B cell (primary cell): ENCODE measurements at regions of chr6 and their contacts with region 1.

Region 1: GRCh38 chr6:41182069-41183034 is 18.6 kb downstream of the TREML2 start:
- DNase-seq: peak; percentile 66
- ATAC-seq: peak; percentile 71
- H3K4me3 ChIP-seq: no peak overlapping the region
- H3K4me3 Mint-ChIP-seq: peak overlapping the region; percentile 35
- H3K27ac ChIP-seq: peak overlapping the region; percentile 70 to 74
- H3K27ac Mint-ChIP-seq: peak overlapping the region; percentile 75
- H3K4me1 ChIP-seq: peaks cover 48 to 50% of the 10 kb centered on the region in 2 donors
- H3K4me1 Mint-ChIP-seq: peaks cover 54% of the 10 kb centered on the region
- H3K27me3 ChIP-seq: no peaks in the 10 kb centered on the region
- H3K27me3 Mint-ChIP-seq: peaks cover 3% of the 10 kb centered on the region
- CTCF ChIP-seq: peak; percentile 72

Region 2: DNA sequence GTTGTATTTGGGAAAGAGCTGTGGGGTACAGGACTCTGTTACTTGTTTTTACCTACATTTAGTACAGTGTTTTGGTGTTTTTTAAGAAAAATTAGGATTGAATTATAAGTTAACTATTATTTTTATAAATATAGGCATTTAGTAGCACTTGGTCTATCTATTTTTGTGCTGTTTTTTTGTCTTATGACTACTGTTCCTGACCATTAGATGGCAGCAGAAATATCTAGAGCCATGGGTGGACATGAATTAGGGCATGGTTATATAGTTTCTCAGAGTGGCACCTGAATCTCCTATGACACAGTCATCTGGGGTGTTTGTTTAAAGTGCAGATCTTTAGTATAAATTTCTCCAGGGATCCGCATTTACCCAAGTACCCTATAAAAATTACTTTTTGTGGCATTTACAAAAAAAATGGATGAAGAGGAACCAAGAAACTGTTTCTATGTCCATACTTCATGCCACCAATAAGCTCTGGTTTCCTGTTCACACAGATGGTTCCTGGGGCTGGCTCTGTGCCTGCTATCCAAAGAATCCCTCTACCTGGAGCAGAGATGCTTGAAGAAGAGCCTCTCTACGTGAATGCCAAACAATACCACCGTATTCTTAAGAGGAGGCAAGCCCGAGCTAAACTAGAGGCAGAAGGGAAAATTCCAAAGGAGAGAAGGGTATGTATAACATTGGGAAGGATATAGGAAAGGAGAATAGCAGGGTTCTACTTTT is 89.8 kb before region 1 on chr6:
- CTCF ChIA-PET with region 1: interaction called, 11 read pairs
- POLR2A ChIA-PET with region 1: no interaction called
- intact Hi-C with region 1: no loop called
- DNase-seq: peak; percentile 27
- ATAC-seq: no peak
- H3K4me3 ChIP-seq: no peak overlapping the region
- H3K4me3 Mint-ChIP-seq: no peak overlapping the region
- H3K27ac ChIP-seq: no peak overlapping the region
- H3K27ac Mint-ChIP-seq: no peak overlapping the region
- H3K4me1 ChIP-seq: no peaks in the 10 kb centered on the region
- H3K4me1 Mint-ChIP-seq: no peaks in the 10 kb centered on the region
- H3K27me3 ChIP-seq: no peaks in the 10 kb centered on the region
- H3K27me3 Mint-ChIP-seq: no peaks in the 10 kb centered on the region
- CTCF ChIP-seq: peak; percentile 55

Region 3: DNA sequence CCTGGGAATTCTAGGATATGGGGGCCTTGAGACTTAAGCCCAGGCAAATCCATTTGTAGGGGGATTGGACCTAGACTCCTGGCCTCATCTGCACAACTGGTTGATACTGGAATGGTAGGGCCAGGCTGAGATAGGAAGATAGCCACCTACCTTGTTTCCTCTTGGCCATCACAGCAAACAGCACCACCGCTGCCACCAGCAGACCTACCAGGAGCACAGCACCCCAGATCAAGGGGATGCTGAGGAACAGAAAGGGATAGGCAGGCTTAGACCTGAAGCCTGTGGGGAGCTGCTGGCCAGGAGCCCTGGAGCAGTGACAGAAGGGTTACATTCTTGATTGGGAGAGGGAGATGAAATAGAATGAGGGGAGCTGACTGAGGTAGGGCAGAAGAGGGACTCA is 31.7 kb before region 1 on chr6:
- CTCF ChIA-PET with region 1: no interaction called
- POLR2A ChIA-PET with region 1: no interaction called
- intact Hi-C with region 1: no loop called
- DNase-seq: no peak
- ATAC-seq: no peak
- H3K4me3 ChIP-seq: no peak overlapping the region
- H3K4me3 Mint-ChIP-seq: no peak overlapping the region
- H3K27ac ChIP-seq: no peak overlapping the region
- H3K27ac Mint-ChIP-seq: no peak overlapping the region
- H3K4me1 ChIP-seq: no peaks in the 10 kb centered on the region
- H3K4me1 Mint-ChIP-seq: no peaks in the 10 kb centered on the region
- H3K27me3 ChIP-seq: no peaks in the 10 kb centered on the region
- H3K27me3 Mint-ChIP-seq: peaks cover 9% of the 10 kb centered on the region
- CTCF ChIP-seq: no peak

Region 4: GRCh38 chr6:41200296-41200900 is 18.0 kb after region 1 on chr6:
- CTCF ChIA-PET with region 1: interaction called, 11 read pairs
- POLR2A ChIA-PET with region 1: no interaction called
- intact Hi-C with region 1: loop called (anchors 2 kb)
- DNase-seq: peak; percentile 71
- ATAC-seq: peak; percentile 35
- H3K4me3 ChIP-seq: peak overlapping the region; percentile 46 to 62 (median 60)
- H3K4me3 Mint-ChIP-seq: peak overlapping the region; percentile 73
- H3K27ac ChIP-seq: peak overlapping the region; percentile 90 to 94
- H3K27ac Mint-ChIP-seq: peak overlapping the region; percentile 97
- H3K4me1 ChIP-seq: peaks cover 75 to 79% of the 10 kb centered on the region in 2 donors
- H3K4me1 Mint-ChIP-seq: peaks cover 81% of the 10 kb centered on the region
- H3K27me3 ChIP-seq: no peaks in the 10 kb centered on the region
- H3K27me3 Mint-ChIP-seq: no peaks in the 10 kb centered on the region
- CTCF ChIP-seq: no peak